Activated CD8-positive, alpha-beta memory T cell treated with anti-CD3 and anti-CD28 coated beads, Interleukin-2, amount 10 ng/mL, durations not matched to agents 7 days and 5 days (primary cell): ENCODE measurements at regions of chr13 and their contacts with region 1.

Region 1: DNA sequence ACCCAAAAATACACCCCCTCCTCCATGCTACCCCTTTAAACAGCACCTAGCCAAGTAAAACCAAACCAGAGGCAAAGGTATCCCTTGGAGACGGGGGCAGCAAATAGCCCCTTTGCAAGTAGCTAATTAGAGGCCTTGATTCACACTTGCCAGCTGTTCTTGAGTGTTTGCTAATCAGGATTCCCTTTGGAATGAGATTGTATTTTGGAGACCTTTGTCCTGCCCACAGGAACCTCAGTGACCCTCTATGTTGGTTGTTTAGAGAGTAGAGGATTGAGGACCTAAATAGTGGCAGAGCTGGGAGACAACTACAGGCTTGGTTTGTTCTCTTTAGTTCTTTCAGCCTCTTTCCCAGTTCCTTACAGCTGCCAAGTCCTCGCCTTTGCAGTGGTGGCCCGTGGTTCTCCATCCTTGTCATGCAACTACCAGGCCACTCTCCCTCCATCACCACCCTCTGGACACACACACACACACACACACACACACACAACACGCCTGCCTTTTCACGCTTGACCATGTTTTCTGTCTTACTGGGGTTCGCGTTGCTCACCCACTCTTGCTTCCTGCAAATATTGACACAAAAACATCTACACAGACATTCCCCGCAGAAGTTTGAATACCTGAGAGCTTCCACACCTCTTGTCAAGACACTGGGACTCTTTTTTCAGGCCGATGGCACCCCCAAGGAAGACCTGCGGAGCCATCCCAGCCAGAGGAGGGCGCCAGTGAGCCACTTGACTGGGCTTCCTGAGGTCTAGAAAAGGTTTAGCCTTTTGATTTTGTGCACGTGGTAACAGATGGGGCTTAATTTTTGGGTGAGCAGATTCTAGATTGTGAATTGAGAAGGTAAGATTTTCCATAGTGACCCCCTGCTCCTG is 80.0 kb upstream of the GPR183 start:
- DNase-seq: peak; percentile 87
- ATAC-seq: peak; percentile 65
- H3K4me3 Mint-ChIP-seq: no peak overlapping the region
- H3K27ac Mint-ChIP-seq: peak overlapping the region; percentile 25
- H3K4me1 Mint-ChIP-seq: peaks cover 37% of the 10 kb centered on the region
- H3K27me3 Mint-ChIP-seq: no peaks in the 10 kb centered on the region

Region 2: DNA sequence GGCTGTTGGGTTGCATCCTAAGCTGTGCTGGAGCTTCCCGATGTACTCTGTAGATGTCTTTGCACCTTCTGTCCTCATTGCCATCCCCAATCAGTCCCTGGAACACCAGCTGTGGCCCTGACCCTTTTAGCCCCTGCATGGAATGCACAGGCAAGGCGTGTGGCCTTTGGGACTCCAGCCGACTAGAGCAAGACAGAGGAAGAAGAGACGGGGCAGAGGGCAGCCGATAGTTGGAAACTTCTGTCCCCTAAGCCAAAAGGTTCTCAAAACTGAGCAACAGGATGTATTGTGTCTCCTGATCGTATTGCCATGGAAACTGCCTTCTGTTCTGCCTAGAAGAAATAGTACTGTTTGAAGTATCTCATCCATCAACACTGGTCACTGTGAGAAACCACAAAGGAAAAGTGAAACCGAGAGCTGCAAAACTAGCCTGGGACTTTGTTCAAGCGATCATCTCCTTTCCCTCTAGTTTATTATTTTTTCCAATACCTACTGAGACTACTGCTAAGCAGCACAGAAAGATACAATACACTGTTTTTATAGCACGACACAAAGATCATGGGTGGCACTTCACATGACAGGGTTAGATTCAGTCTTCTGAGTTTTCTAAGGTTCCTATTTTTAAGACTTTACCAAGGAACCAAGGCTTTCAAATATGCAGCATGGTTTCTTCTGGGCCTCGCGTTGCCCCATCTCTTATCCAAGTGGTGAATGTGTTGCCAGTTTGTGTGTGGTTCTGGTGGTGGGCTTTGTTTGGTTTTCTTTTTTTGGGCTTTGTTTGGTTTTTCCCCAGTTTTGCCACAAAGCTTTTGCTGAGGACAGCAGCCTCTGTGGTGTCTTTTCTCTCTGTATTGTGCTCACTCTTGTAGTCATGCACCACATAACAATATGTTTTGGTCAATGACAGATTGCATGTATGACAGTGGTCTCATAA is 30.7 kb before region 1 on chr13:
- CTCF ChIA-PET with region 1: interaction called, 11 read pairs
- DNase-seq: peak; percentile 83
- ATAC-seq: peak; percentile 67
- H3K4me3 Mint-ChIP-seq: peak overlapping the region; percentile 48
- H3K27ac Mint-ChIP-seq: peak overlapping the region; percentile 95
- H3K4me1 Mint-ChIP-seq: peaks cover 91% of the 10 kb centered on the region
- H3K27me3 Mint-ChIP-seq: no peaks in the 10 kb centered on the region

Region 3: GRCh38 chr13:99374994-99375737 is 12.0 kb before region 1 on chr13:
- CTCF ChIA-PET with region 1: interaction called, 16 read pairs
- DNase-seq: no peak
- ATAC-seq: peak; percentile 29
- H3K4me3 Mint-ChIP-seq: peak overlapping the region; percentile 38
- H3K27ac Mint-ChIP-seq: peak overlapping the region; percentile 70
- H3K4me1 Mint-ChIP-seq: peaks cover 72% of the 10 kb centered on the region
- H3K27me3 Mint-ChIP-seq: no peaks in the 10 kb centered on the region

Region 4: DNA sequence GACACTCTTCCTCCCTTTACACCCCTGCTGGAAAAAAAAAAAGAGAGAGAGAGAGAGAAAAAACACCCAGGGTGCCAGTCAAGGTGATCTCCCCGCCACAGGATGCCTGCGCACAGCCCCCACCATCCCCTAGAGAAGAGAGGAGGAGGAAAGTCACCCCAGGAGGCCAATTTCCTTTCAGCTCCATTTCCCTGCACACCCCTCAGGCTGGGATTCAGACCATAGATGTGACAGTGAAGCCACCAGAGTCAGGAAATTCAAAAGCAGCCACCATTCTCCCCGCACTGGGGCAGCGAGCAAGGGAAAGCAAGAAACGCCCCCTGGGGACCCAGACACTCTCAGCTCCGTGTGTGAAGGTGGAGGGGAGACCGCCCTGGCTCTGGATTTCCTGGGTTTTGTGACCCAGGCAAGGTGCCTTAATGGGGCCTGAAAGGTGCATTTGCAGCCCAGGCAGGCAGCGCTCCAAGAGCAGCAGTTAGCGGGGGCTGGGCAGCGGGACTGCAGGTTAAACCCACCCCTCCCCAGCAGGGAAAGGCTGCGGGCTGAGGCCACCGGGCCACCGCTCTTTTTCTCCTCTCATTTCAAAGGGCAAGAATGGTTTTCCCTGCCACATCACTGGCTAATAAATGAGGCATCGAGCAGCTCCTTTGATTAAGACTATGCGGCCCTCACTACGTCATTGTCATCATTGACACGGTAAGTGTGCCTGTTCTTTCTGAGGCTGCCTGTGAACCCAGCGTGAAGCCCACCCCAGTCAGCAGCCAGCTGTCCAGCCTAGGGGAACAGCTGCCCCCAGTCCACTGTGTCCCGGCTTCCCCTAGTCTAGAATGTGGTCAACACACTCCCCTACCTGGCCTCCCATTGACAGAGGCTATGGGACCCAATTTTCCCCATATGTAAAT is 30.3 kb after region 1 on chr13:
- CTCF ChIA-PET with region 1: interaction called, 29 read pairs
- DNase-seq: no peak
- ATAC-seq: no peak
- H3K4me3 Mint-ChIP-seq: no peak overlapping the region
- H3K27ac Mint-ChIP-seq: no peak overlapping the region
- H3K4me1 Mint-ChIP-seq: peaks cover 33% of the 10 kb centered on the region
- H3K27me3 Mint-ChIP-seq: no peaks in the 10 kb centered on the region

Region 5: GRCh38 chr13:99425485-99426341 is 38.6 kb after region 1 on chr13:
- CTCF ChIA-PET with region 1: interaction called, 29 read pairs
- DNase-seq: peak; percentile 72
- ATAC-seq: peak; percentile 67
- H3K4me3 Mint-ChIP-seq: peak overlapping the region; percentile 34
- H3K27ac Mint-ChIP-seq: peak overlapping the region; percentile 81
- H3K4me1 Mint-ChIP-seq: peaks cover 42% of the 10 kb centered on the region
- H3K27me3 Mint-ChIP-seq: peaks cover 2% of the 10 kb centered on the region